K562 (cell line): ENCODE measurements at regions of chr6 and their contacts with region 1.

Region 1: DNA sequence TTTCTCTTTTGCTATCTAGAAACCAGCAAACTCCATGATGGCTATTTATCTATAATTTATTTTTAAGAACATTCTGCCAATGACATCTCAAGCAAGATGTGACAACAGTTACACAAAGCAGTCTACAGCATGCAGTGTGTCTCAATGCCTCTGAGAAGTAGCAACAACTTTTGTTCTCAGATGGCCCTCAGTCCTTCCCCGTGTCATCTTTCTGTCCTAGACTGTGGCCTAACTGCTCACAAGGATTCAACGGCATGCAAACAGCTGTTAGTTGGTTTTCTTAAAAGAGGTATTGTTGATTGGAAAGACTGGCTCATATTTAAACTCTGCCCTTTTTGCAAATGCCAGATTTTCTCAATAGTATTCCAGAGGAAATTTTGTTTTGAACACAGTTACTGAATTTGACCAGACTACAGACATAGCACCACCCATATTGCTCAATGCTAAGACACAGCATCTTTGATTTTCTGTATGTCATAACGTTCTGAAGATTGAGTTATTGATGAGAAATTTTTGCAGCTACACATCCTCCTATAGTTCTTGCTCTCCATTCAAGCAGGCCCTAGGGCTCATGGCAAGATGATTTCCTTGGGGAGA is 26.1 kb upstream of the F13A1 start:
- DNase-seq: no peak
- ATAC-seq: no peak
- H3K4me3 ChIP-seq: no peak overlapping the region
- H3K27ac ChIP-seq: no peak overlapping the region
- H3K4me1 ChIP-seq: no peaks in the 10 kb centered on the region
- H3K27me3 ChIP-seq: no peaks in the 10 kb centered on the region
- CTCF ChIP-seq: no peak
- EP300 ChIP-seq: no peak
- POLR2A ChIP-seq: no peak
- RAD21 ChIP-seq: no peak

Region 2: DNA sequence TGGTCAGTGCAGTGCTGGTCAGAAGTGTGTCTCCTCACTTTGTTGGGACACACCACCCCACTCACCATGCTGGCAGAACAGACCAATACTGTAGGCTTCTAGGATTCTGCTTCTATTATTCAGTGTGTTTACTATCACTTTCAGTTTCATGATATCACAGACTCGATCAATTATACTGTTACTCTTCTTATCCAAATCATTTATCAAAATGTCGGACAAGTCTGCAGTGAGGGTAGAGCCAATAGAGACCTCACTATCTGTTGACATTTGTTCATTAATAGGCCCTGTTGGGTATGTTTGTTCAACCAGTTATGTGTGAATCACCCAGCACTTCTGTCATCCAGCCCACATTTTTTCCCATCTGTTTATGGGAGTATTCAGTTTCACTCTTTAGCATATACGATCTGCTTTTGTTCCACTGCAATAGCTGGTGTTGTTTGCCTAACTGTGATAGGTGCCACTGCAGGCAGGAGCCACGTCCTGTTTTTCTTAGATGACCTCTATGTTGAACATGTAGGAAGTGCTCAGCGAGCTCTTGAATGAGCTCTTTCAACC is 479.9 kb before region 1 on chr6:
- CTCF ChIA-PET with region 1: no interaction called
- POLR2A ChIA-PET with region 1: no interaction called
- in situ Hi-C with region 1: loop called (anchors 10 kb)
- intact Hi-C with region 1: no loop called
- DNase-seq: no peak
- ATAC-seq: no peak
- H3K4me3 ChIP-seq: no peak overlapping the region
- H3K27ac ChIP-seq: no peak overlapping the region
- H3K4me1 ChIP-seq: no peaks in the 10 kb centered on the region
- H3K27me3 ChIP-seq: peaks cover 6 to 23% of the 10 kb centered on the region in 2 experiments; a peak in 3 of 5 replicates
- CTCF ChIP-seq: no peak
- EP300 ChIP-seq: no peak
- POLR2A ChIP-seq: no peak
- RAD21 ChIP-seq: no peak